Aorta (tissue), 5 donors: ENCODE measurements at regions of chr18 and their contacts with region 1.

Region 1: GRCh38 chr18:66979009-66979408 is 375.1 kb upstream of the CDH19 start:
- DNase-seq: no peak
- ATAC-seq: no peak
- H3K4me3 ChIP-seq: no peak overlapping the region
- H3K27ac ChIP-seq: no peak overlapping the region
- H3K4me1 ChIP-seq: no peaks in the 10 kb centered on the region
- H3K27me3 ChIP-seq: no peaks in the 10 kb centered on the region

Region 2: GRCh38 chr18:66900837-66901236 is 78.2 kb before region 1 on chr18:
- intact Hi-C with region 1: no loop called
- DNase-seq: no peak
- ATAC-seq: no peak
- H3K4me3 ChIP-seq: no peak overlapping the region
- H3K27ac ChIP-seq: no peak overlapping the region
- H3K4me1 ChIP-seq: no peaks in the 10 kb centered on the region
- H3K27me3 ChIP-seq: no peaks in the 10 kb centered on the region

Region 3: GRCh38 chr18:67043276-67043675 is 64.3 kb after region 1 on chr18:
- intact Hi-C with region 1: loop called in 1 of 2 experiments (anchors 5 kb)
- DNase-seq: peak; percentile 31 to 32
- ATAC-seq: no peak
- H3K4me3 ChIP-seq: no peak overlapping the region
- H3K27ac ChIP-seq: no peak overlapping the region
- H3K4me1 ChIP-seq: no peaks in the 10 kb centered on the region
- H3K27me3 ChIP-seq: no peaks in the 10 kb centered on the region